Activated naive CD4-positive, alpha-beta T cell treated with anti-CD3 and anti-CD28 coated beads for 36 hours (primary cell): ENCODE measurements at regions of chr7 and their contacts with region 1.

Region 1: GRCh38 chr7:148503875-148504487 is 86.6 kb upstream of the C7orf33 start:
- DNase-seq: no peak
- H3K4me3 Mint-ChIP-seq: no peak overlapping the region
- H3K27ac Mint-ChIP-seq: no peak overlapping the region
- H3K4me1 Mint-ChIP-seq: peaks cover 32% of the 10 kb centered on the region
- H3K27me3 Mint-ChIP-seq: peaks cover 21% of the 10 kb centered on the region

Region 2: DNA sequence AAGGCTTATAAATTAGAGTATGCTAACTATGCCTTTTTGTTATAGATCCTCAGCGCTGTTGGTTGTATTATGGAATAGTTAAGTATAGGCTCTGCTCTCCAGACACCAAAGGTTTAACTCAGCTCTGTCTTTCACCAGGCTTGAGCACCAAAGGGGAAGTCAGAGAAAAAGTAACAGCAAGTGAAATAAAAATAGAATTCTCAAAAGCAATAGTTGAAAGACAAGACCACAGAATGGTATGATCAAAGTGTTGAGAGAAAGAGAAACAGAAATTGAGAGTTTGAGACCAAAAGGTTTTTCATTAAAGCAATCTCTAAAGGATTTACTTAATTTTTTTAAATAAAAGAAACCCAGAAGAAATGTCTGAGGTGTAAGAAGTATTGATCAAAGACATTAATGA is 443.3 kb before region 1 on chr7:
- CTCF ChIA-PET with region 1: no interaction called
- intact Hi-C with region 1: no loop called
- DNase-seq: no peak
- H3K4me3 Mint-ChIP-seq: no peak overlapping the region
- H3K27ac Mint-ChIP-seq: no peak overlapping the region
- H3K4me1 Mint-ChIP-seq: no peaks in the 10 kb centered on the region
- H3K27me3 Mint-ChIP-seq: no peaks in the 10 kb centered on the region

Region 3: DNA sequence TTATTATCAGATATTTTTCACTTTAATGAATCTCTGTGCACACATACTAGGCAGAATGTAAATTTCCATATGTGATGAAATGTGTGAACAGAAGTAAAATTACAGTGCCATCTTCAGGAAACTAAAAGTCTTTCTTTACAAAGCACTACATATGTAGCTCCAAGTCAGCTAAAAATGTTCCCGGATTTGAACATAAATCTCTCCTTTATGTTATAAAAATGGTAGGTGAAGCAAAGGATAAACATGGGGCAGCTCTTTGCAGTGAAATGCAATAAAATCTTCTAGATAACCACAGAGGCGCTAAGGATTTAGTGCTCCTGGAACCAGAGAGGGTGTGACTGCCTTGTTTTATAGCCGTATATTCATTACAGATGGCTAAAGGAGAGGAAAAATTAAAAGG is 18.4 kb before region 1 on chr7:
- CTCF ChIA-PET with region 1: no interaction called
- intact Hi-C with region 1: no loop called
- DNase-seq: no peak
- H3K4me3 Mint-ChIP-seq: no peak overlapping the region
- H3K27ac Mint-ChIP-seq: no peak overlapping the region
- H3K4me1 Mint-ChIP-seq: peaks cover 3% of the 10 kb centered on the region
- H3K27me3 Mint-ChIP-seq: peaks cover 5% of the 10 kb centered on the region

Region 4: GRCh38 chr7:148527707-148528168 is 23.8 kb after region 1 on chr7:
- CTCF ChIA-PET with region 1: interaction called, 24 read pairs
- intact Hi-C with region 1: loop called (anchors 1 kb)
- DNase-seq: peak; percentile 98
- H3K4me3 Mint-ChIP-seq: no peak overlapping the region
- H3K27ac Mint-ChIP-seq: no peak overlapping the region
- H3K4me1 Mint-ChIP-seq: peaks cover 4% of the 10 kb centered on the region
- H3K27me3 Mint-ChIP-seq: peaks cover 33% of the 10 kb centered on the region

Region 5: DNA sequence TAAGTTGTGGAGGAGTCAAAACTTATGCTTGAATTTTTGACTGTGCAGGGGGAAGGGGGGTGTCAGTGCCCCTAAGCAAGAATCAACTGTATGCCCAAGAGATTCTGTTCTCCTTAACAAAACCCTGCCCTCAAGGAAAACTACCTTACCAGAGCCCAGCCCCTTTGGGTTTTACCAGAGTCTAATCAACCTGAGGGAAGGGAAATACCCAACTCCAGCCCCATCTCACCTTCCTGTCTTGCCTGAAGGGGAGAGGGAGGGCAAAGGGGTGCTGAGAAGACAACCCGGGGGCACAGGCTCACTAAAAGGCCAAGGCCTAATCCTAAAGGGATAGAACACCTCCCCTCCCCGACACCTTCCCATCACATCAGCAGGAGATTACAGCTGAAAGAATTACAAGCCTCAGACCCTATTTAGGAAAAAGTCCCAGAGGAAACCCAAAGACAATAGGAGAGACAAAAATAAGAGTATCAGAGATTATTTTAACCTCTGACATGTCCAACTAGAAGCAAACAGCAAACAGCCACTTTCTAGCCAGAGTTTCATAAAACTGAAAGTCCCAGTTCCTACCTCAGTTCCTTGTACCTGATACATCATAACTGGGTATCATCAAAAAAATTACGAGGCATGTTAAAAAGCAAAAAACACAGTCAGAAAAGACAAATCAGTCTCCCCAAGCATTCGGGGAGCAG is 59.7 kb after region 1 on chr7:
- CTCF ChIA-PET with region 1: interaction called, 4 read pairs
- intact Hi-C with region 1: loop called (anchors 1 kb)
- DNase-seq: peak; percentile 53
- H3K4me3 Mint-ChIP-seq: peak overlapping the region; percentile 20
- H3K27ac Mint-ChIP-seq: peak overlapping the region; percentile 89
- H3K4me1 Mint-ChIP-seq: peaks cover 27% of the 10 kb centered on the region
- H3K27me3 Mint-ChIP-seq: peaks cover 2% of the 10 kb centered on the region

Region 6: GRCh38 chr7:148584154-148584827 is 80.3 kb after region 1 on chr7:
- CTCF ChIA-PET with region 1: interaction called, 3 read pairs
- intact Hi-C with region 1: loop called (anchors 1 kb)
- DNase-seq: peak; percentile 42
- H3K4me3 Mint-ChIP-seq: no peak overlapping the region
- H3K27ac Mint-ChIP-seq: no peak overlapping the region
- H3K4me1 Mint-ChIP-seq: peaks cover 17% of the 10 kb centered on the region
- H3K27me3 Mint-ChIP-seq: no peaks in the 10 kb centered on the region

Region 7: DNA sequence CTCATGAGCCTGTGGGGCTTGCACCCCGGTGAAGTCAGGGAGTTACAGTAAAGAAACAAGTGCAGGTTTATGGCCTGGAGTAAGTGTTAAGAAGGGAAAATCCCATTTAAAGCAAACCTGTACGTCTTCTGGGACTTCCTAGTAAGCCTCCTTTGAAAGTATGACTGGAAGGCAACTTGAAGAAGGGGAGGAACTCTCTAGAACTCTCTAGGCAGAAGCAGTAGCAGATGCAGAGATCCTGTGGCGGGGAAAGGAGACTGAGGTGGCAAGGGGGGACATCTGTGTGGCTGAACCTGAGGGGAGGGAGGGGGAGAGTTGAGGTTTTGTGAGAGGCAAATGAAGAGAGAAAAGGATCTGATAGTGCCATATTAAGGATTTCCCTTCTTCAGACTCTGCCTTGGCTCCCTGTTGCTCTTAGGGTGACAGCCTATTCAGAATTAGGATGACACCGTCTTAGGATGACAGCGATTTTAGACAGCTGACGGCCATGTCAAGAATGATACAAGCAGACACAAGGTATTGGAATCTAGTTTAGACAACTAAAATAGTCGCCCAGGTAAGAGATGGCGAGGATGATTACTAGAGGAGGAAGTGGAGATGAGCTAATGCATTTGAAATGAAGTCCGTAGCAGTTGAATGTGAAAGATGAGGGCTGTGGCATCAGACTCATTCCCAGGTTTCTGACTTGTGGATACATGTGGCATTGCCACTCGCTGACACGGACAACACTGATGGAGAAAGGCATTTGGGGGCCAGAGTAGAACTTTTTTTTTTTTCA is 223.7 kb after region 1 on chr7:
- CTCF ChIA-PET with region 1: no interaction called
- intact Hi-C with region 1: loop called (anchors 1 kb)
- DNase-seq: peak; percentile 83
- H3K4me3 Mint-ChIP-seq: no peak overlapping the region
- H3K27ac Mint-ChIP-seq: peak overlapping the region; percentile 64
- H3K4me1 Mint-ChIP-seq: peaks cover 66% of the 10 kb centered on the region
- H3K27me3 Mint-ChIP-seq: no peaks in the 10 kb centered on the region

Region 8: GRCh38 chr7:148793590-148793989 is 289.6 kb after region 1 on chr7:
- CTCF ChIA-PET with region 1: no interaction called
- intact Hi-C with region 1: loop called (anchors 5 kb)
- DNase-seq: no peak
- H3K4me3 Mint-ChIP-seq: no peak overlapping the region
- H3K27ac Mint-ChIP-seq: peak overlapping the region; percentile 34
- H3K4me1 Mint-ChIP-seq: peaks cover 4% of the 10 kb centered on the region
- H3K27me3 Mint-ChIP-seq: no peaks in the 10 kb centered on the region

Region 9: DNA sequence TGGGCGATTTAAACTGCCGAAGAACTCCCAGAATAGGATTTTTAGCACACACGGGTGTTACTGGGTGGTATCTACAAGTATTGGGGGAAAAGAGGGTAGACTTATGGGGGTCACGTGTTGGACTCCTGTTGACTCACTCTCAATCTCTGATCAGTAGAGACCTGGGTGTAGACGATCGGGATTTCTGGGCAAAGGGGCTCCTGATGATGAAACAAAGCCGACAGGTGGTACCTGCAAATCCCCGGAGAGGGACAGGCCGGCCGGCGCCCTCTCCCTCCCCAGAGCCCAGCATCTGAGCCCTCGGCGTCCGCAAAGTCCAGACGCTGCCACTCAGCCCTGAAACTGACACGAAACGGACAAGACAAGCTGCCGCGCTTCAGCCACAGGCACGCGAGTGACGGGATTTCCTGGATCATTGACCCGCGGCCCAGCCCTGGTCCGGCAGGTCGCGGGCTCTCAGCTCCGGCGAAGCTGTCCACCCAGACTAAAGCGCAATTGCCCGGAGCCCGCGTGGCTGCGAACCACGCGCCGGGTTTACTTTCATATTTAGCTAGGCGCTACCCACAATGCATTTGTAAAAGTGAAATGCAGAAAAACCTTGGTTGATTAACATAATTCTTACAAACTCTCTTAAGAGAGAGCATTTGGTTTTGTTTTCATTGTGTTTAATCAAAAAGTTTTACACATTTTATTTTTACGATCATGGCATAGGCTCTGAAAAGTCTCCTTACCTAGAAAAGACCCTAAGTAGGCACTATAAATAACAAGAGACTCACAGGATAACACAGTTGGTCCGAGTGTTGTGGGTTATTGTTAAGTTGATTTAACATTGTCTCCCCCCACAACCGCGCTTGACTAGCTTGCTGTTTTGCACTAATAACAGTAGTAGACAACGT is 437.0 kb after region 1 on chr7:
- CTCF ChIA-PET with region 1: interaction called, 4 read pairs
- intact Hi-C with region 1: loop called (anchors 1 kb)
- DNase-seq: peak; percentile 68
- H3K4me3 Mint-ChIP-seq: peak overlapping the region; percentile 94
- H3K27ac Mint-ChIP-seq: peak overlapping the region; percentile 98
- H3K4me1 Mint-ChIP-seq: peaks cover 15% of the 10 kb centered on the region
- H3K27me3 Mint-ChIP-seq: no peaks in the 10 kb centered on the region